ENCODE measurements at regions of chr11 and their contacts with region 1.

Region 1: DNA sequence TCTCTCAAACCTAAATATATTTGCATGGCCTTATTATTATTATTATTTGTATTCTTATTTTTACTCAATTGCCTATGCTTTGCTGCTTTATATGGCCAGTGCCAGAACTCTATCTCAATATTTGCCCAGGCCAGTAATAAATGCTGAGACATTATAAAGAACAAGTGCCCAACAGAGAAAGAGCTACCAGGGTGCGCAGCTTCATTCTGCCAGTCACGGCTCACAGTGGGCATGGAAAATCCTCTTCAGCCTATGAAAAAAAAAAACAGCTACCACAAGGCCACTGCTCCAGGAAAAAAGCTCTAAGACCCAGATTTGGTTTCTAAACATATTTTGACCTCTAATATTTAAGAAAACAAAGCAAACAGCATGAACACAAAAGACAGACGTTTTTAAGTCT is 1223.6 kb downstream of the LRRC4C start:
- DNase-seq: peak in 1 of 10 donors; percentile 19
- H3K4me3 ChIP-seq: peak overlapping the region in 1 of 59 donors; percentile 5
- H3K27ac ChIP-seq: peak overlapping the region in 18 of 59 donors; percentile 2 to 66 (median 22)
- H3K27me3 ChIP-seq: no peaks in the 10 kb centered on the region
- CTCF ChIP-seq: no peak

Region 2: GRCh38 chr11:40130427-40130826 is 105.4 kb before region 1 on chr11:
- intact Hi-C with region 1: loop called in 1 of 2 experiments (anchors 10 kb)
- DNase-seq: peak in 2 of 10 donors; percentile 33 to 48
- H3K4me3 ChIP-seq: no peak overlapping the region
- H3K27ac ChIP-seq: peak overlapping the region in 11 of 59 donors; percentile 1 to 49 (median 7)
- H3K27me3 ChIP-seq: no peaks in the 10 kb centered on the region
- CTCF ChIP-seq: peak; percentile 27 to 80 (median 63)

Region 3: GRCh38 chr11:40281052-40281580 is 45.3 kb after region 1 on chr11:
- intact Hi-C with region 1: loop called in 1 of 2 experiments (anchors 5 kb)
- DNase-seq: no peak
- H3K4me3 ChIP-seq: peak overlapping the region; percentile 20 to 69 (median 52)
- H3K27ac ChIP-seq: peak overlapping the region in 58 of 59 donors; percentile 26 to 94 (median 83)
- H3K27me3 ChIP-seq: no peaks in the 10 kb centered on the region
- CTCF ChIP-seq: no peak

Measured in dorsolateral prefrontal cortex (tissue), 120 donors.